WTC11 (cell line): ENCODE measurements at regions of chr2 and their contacts with region 1.

Region 1: DNA sequence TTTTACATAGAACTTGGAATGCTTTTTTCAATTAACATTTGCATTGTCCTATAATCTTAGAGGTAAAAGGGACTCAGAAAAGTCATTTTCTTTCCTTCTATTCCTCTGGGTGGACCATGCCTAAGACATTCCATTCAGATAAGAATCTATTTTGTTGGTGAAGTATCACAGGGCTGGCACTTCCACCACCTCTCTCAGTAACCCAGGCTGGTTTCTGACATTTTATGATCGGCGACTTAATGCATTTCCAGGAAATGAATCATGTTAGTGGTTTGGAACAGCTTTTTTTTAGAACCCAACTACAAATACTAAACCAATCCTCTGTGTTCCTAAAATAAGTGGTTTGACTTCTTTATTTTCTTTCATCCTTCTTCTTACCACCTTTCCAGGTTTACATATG is 27.0 kb downstream of the GAD1 start:
- DNase-seq: no peak
- ATAC-seq: no peak
- H3K4me3 Mint-ChIP-seq: no peak overlapping the region
- H3K27ac Mint-ChIP-seq: no peak overlapping the region
- H3K4me1 Mint-ChIP-seq: no peaks in the 10 kb centered on the region
- H3K27me3 Mint-ChIP-seq: no peaks in the 10 kb centered on the region
- CTCF ChIP-seq: no peak

Region 2: DNA sequence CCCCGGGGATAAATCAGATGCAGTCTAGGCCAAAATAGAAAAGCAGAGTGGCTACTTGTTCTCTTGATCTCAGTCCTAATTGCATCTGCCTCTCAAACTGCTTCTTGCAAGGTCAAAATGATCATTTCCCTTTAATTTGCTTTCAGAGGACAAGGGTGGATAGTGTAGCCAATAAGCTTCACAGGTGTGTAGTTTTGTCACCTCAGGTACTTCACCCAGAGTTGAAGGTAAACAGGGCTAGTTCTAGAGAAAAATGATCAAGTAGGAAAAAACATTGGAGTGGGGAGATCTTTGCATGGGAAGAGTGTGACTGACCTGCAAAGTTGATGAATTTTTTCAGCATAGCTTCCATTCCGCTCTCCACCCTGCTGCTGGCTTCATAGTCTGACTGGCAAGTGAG is 64.8 kb before region 1 on chr2:
- CTCF ChIA-PET with region 1: no interaction called
- POLR2A ChIA-PET with region 1: no interaction called
- DNase-seq: no peak
- ATAC-seq: no peak
- H3K4me3 Mint-ChIP-seq: no peak overlapping the region
- H3K27ac Mint-ChIP-seq: no peak overlapping the region
- H3K4me1 Mint-ChIP-seq: peaks cover 14% of the 10 kb centered on the region
- H3K27me3 Mint-ChIP-seq: no peaks in the 10 kb centered on the region
- CTCF ChIP-seq: no peak

Region 3: DNA sequence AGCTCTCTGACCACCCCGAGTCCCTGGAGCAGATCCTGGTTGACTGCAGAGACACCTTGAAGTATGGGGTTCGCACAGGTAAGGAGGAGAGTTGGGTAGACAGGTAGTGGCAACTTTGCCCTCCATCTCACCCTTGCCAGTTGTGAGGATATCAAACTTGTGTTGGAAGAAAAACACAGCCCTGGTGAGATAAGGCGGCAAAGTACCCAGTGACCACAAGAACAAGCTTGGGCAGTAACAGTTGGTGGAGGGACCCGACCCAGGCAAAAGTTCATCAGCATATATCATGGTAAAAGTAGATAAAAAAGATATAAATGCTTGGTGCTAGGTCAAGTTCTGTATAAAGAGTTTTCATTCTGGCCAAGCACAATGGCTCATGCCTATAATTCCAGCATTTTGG is 12.5 kb before region 1 on chr2:
- CTCF ChIA-PET with region 1: interaction called, 22 read pairs
- POLR2A ChIA-PET with region 1: no interaction called
- DNase-seq: no peak
- ATAC-seq: no peak
- H3K4me3 Mint-ChIP-seq: no peak overlapping the region
- H3K27ac Mint-ChIP-seq: no peak overlapping the region
- H3K4me1 Mint-ChIP-seq: no peaks in the 10 kb centered on the region
- H3K27me3 Mint-ChIP-seq: peaks cover 38% of the 10 kb centered on the region
- CTCF ChIP-seq: no peak

Region 4: DNA sequence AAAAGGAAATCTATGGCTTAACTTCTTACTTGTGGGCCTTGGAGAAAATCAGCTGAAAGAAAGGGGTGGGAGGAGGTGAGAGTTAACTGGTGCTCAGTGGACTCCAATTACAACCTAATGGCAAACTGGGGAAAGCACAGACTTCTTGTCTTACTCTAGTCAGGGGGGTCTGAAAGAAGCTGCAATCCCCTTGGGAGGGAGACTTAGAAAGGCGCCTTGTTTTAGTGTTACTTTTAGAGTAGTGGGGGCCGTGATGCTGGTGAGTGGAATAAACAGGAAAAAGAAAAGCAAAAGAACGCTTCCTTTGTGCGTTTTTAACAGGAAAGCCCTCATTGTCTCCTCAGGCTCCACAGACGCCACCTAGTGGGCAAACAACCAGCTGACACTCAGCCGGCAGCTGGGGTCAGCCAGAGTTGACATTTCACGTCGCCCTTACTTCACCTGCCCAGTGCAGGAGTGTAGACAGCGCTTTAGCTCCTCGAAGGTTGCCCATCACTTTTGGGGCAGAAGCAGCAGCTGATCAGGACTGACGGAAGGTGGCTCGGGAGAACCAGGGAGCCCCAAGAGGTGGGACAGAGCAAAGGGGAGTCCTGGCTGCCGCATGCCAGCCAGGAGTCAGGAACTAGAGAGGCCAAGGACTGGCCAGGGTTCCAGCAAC is 29.5 kb after region 1 on chr2:
- CTCF ChIA-PET with region 1: interaction called, 53 read pairs
- POLR2A ChIA-PET with region 1: no interaction called
- DNase-seq: peak; percentile 89
- ATAC-seq: peak; percentile 95
- H3K4me3 Mint-ChIP-seq: peak overlapping the region; percentile 52
- H3K27ac Mint-ChIP-seq: no peak overlapping the region
- H3K4me1 Mint-ChIP-seq: peaks cover 8% of the 10 kb centered on the region
- H3K27me3 Mint-ChIP-seq: no peaks in the 10 kb centered on the region
- CTCF ChIP-seq: peak; percentile 87; the same call in 1 of the 2 replicates

Region 5: DNA sequence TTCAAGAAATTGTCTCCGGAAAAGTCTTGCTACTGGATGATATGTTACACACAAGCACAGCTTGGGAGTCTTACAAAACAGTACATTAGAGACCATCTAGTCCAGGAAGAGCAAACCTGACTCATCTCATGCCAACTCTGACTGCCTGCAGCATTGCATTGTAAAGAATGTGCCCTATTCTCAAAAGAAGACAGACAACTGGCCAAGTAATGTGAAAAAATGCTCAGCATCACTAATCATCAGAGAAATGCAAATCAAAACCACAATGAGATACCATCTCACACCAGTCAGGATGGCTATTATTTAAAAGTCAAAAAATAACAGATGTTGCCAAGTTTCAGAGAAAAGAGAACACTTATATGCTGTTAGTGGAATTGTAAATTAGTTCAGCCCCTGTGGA is 42.7 kb after region 1 on chr2:
- CTCF ChIA-PET with region 1: interaction called, 15 read pairs
- POLR2A ChIA-PET with region 1: no interaction called
- DNase-seq: no peak
- ATAC-seq: no peak
- H3K4me3 Mint-ChIP-seq: no peak overlapping the region
- H3K27ac Mint-ChIP-seq: no peak overlapping the region
- H3K4me1 Mint-ChIP-seq: peaks cover 9% of the 10 kb centered on the region
- H3K27me3 Mint-ChIP-seq: peaks cover 2% of the 10 kb centered on the region
- CTCF ChIP-seq: no peak

Region 6: DNA sequence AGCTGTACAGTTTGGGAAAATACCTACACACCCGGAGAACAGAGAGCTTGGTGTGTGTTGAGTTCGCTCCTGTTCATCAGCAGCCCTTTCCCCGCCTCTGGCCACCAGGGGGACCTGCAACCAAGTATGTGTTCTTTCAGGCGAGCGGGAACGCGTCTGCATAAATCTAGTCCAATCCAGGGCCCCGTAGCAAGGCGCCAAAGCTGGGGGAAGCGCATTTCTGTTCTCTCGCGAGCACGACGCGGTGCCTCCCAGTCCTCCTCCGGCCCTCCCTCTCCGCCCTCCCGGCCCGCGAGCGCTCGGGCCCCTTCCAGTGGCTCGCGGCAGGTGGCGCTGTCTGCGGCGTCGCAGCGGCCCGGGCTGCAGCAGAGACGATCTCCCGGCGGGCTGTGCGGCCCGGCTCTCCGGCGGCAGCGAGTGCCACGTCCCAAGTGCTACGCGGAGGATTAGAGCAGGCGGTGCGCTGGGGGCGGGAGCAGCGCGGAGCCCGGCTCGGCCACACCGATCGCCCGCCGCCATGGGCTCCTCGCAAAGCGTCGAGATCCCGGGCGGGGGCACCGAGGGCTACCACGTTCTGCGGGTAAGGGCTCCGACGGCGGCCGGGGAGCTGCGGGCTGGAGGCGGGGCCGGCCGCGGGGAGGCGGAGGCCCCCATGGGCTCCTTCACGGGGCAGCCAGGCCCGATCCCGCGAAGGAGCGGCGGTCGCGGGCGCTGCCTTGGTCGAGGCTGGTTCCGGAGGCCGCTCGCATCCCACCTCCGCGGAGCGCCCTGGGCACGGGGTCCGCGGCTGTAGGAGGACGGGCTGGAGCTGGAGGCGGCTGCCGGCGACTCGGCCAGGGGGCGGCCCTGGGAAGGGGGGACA is 85.4 kb after region 1 on chr2 and contains the start of gene GORASP2:
- CTCF ChIA-PET with region 1: interaction called, 15 read pairs
- POLR2A ChIA-PET with region 1: no interaction called
- DNase-seq: peak; percentile 99
- ATAC-seq: peak; percentile 97
- H3K4me3 Mint-ChIP-seq: peak within 1 kb of the TSS; percentile 91
- H3K27ac Mint-ChIP-seq: peak within 1 kb of the TSS; percentile 97
- H3K4me1 Mint-ChIP-seq: peaks cover 46% of the 10 kb centered on the region
- H3K27me3 Mint-ChIP-seq: no peaks in the 10 kb centered on the region
- CTCF ChIP-seq: peak; percentile 91
- total RNA-seq, gene GORASP2: 77.8 to 102 TPM (median 79.2 TPM) in 3 replicates